Activated CD8-positive, alpha-beta T cell treated with anti-CD3 and anti-CD28 coated beads for 36 hours (primary cell): ENCODE measurements at regions of chr7 and their contacts with region 1.

Region 1: GRCh38 chr7:23357190-23358093 is 58.3 kb downstream of the MALSU1 start:
- DNase-seq: no peak
- ATAC-seq: peak; percentile 52
- H3K4me3 Mint-ChIP-seq: no peak overlapping the region
- H3K27ac Mint-ChIP-seq: no peak overlapping the region
- H3K4me1 Mint-ChIP-seq: peaks cover 18% of the 10 kb centered on the region
- H3K27me3 Mint-ChIP-seq: peaks cover 12% of the 10 kb centered on the region
- CTCF ChIP-seq: peak; percentile 75

Region 2: GRCh38 chr7:23373151-23374004 is 15.9 kb after region 1 on chr7:
- CTCF ChIA-PET with region 1: interaction called, 8 read pairs
- POLR2A ChIA-PET with region 1: interaction called, 8 read pairs
- intact Hi-C with region 1: loop called (anchors 2 kb)
- DNase-seq: peak; percentile 87
- ATAC-seq: peak; percentile 78
- H3K4me3 Mint-ChIP-seq: peak overlapping the region; percentile 53
- H3K27ac Mint-ChIP-seq: peak overlapping the region; percentile 94
- H3K4me1 Mint-ChIP-seq: peaks cover 65% of the 10 kb centered on the region
- H3K27me3 Mint-ChIP-seq: peaks cover 8% of the 10 kb centered on the region
- CTCF ChIP-seq: no peak

Region 3: DNA sequence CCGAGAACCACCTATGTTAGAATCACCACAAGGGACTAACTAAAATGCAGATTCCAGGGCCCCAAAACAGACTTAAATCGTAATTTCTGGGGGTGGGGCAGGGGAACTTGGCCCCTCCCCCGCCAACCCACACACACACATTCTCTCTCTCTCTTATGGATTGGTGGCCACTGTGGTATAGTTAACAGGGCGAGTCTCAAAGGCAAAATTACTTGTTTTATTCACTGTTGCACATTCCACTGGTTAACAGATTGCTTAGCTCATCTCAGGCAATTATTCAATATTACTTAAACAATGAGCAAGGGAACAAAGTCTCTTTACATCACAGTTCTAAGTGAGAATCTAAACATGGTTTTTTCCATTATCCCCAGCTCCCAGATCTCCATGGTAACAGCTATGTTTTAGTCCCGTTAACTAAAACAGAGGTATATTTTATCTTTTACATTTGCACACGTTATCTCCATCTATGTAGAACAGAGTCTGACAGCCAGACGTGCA is 74.3 kb after region 1 on chr7:
- CTCF ChIA-PET with region 1: interaction called, 26 read pairs
- POLR2A ChIA-PET with region 1: no interaction called
- intact Hi-C with region 1: no loop called
- DNase-seq: no peak
- ATAC-seq: no peak
- H3K4me3 Mint-ChIP-seq: no peak overlapping the region
- H3K27ac Mint-ChIP-seq: no peak overlapping the region
- H3K4me1 Mint-ChIP-seq: peaks cover 8% of the 10 kb centered on the region
- H3K27me3 Mint-ChIP-seq: peaks cover 18% of the 10 kb centered on the region
- CTCF ChIP-seq: no peak

Region 4: GRCh38 chr7:23462846-23463245 is 105.4 kb after region 1 on chr7:
- CTCF ChIA-PET with region 1: interaction called, 47 read pairs
- POLR2A ChIA-PET with region 1: no interaction called
- intact Hi-C with region 1: loop called (anchors 2 kb)
- DNase-seq: peak; percentile 31
- ATAC-seq: peak; percentile 51
- H3K4me3 Mint-ChIP-seq: no peak overlapping the region
- H3K27ac Mint-ChIP-seq: no peak overlapping the region
- H3K4me1 Mint-ChIP-seq: peaks cover 11% of the 10 kb centered on the region
- H3K27me3 Mint-ChIP-seq: peaks cover 56% of the 10 kb centered on the region
- CTCF ChIP-seq: no peak

Region 5: DNA sequence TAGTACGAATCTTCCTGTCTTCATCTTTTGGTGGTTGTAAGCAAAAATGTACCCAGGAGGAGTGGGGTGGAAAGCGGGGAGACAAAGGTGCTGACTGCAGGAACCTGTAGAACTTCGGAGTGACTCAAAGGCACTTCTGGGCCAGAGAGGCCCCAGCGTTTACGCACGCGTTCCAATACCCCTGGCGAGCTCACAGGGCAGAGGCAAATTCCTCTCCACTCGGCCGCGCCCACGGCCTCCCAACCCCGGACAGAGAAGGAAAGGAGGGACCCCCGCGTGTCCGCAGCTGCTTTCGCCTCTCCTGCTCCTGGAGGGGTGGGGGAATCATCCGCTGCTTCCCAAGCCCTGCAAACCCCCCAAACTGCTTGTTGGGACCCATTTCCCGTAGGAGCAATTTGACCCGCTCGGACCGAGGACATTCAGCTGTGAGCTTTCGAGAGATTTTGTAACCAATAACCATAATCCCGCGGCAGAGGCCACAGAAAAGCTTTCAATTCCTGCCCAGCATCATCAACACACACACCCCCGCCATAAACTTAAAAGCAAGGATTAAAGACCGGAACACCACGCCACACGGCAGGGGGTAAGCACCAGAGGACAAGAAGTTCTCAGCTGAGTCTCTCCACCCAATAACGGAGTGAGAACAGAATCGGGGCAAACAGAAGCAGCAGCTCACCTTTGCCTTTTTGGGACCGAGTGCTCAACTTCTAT is 110.5 kb after region 1 on chr7:
- CTCF ChIA-PET with region 1: interaction called, 47 read pairs
- POLR2A ChIA-PET with region 1: no interaction called
- intact Hi-C with region 1: loop called (anchors 2 kb)
- DNase-seq: peak; percentile 61
- ATAC-seq: peak; percentile 38
- H3K4me3 Mint-ChIP-seq: peak overlapping the region; percentile 59
- H3K27ac Mint-ChIP-seq: no peak overlapping the region
- H3K4me1 Mint-ChIP-seq: peaks cover 31% of the 10 kb centered on the region
- H3K27me3 Mint-ChIP-seq: peaks cover 67% of the 10 kb centered on the region
- CTCF ChIP-seq: no peak

Region 6: GRCh38 chr7:23531794-23532489 is 174.5 kb after region 1 on chr7 and contains the start of gene TRA2A:
- CTCF ChIA-PET with region 1: interaction called, 3 read pairs
- POLR2A ChIA-PET with region 1: no interaction called
- intact Hi-C with region 1: loop called (anchors 10 kb)
- DNase-seq: peak; percentile 99
- ATAC-seq: peak; percentile 89
- H3K4me3 Mint-ChIP-seq: peak within 1 kb of the TSS; percentile 93
- H3K27ac Mint-ChIP-seq: peak within 1 kb of the TSS; percentile 100
- H3K4me1 Mint-ChIP-seq: peaks cover 39% of the 10 kb centered on the region
- H3K27me3 Mint-ChIP-seq: no peaks in the 10 kb centered on the region
- CTCF ChIP-seq: no peak
- total RNA-seq, gene TRA2A: 86.3 to 86.5 TPM